ENCODE measurements at regions of chr6 and their contacts with region 1.

Region 1: GRCh38 chr6:13908955-13909381 is 15.8 kb upstream of the RNF182 start:
- DNase-seq: peak; percentile 27
- ATAC-seq: peak; percentile 91
- H3K4me3 ChIP-seq: no peak overlapping the region
- H3K27ac ChIP-seq: no peak overlapping the region
- H3K4me1 ChIP-seq: no peaks in the 10 kb centered on the region
- H3K27me3 ChIP-seq: no peaks in the 10 kb centered on the region
- CTCF ChIP-seq: peak; percentile 72 to 88 (median 72)
- EP300 ChIP-seq: no peak
- POLR2A ChIP-seq: no peak
- RAD21 ChIP-seq: peak; percentile 93

Region 2: DNA sequence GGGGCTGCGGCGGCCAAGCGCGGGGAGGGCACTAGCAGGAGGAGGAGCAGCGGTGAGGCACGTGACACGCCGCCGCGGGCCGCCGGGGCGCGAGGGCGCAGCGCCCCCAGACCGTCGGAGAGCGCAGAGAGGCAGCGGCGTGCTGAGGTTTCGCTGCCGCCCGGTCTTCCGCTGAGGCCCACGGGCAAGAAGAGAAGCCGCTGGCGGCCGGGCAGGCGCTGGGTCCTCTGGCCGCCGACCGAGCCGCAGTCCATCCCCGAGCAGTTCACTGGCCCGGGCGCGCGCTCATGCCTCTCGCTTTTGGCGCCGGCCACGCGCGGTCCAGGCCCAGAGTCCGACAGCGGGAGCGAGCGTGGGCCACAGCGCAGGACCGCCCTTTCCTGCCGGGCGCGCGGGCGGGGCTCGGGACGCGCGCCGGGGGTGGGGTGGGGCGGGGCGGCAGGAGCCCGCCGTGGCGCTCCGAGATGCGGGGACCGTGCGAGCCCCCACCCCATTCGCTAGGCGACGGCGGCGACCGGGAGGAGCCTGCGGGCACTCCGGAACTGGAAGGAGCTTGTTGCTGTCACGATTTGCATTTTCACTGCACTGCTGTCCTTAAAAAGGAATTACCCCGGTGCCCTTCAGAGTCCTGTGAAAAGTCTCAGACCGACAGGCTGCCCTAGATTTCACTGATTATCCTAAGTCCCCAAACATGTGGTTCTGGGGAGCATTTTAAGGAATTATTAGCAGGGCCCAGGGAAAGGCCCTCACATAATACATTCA is 94.6 kb before region 1 on chr6 and contains the start of gene MCUR1:
- CTCF ChIA-PET with region 1: interaction called, 3 read pairs
- POLR2A ChIA-PET with region 1: interaction called, 4 read pairs
- RAD21 ChIA-PET with region 1: no interaction called
- SMC1A ChIA-PET with region 1: interaction called, 10 read pairs
- in situ Hi-C with region 1: no loop called
- intact Hi-C with region 1: no loop called
- DNase-seq: peak; percentile 80
- ATAC-seq: peak; percentile 89
- H3K4me3 ChIP-seq: peak within 1 kb of the TSS; percentile 74
- H3K27ac ChIP-seq: peak within 1 kb of the TSS; percentile 95
- H3K4me1 ChIP-seq: peaks cover 6% of the 10 kb centered on the region
- H3K27me3 ChIP-seq: no peaks in the 10 kb centered on the region
- CTCF ChIP-seq: peak in 2 of 3 experiments; percentile 5 to 45; a peak in 2 of 6 replicates
- EP300 ChIP-seq: no peak
- POLR2A ChIP-seq: peak; percentile 92
- RAD21 ChIP-seq: 0 out of 2 replicates have a peak, but pooled peaks have one; percentile 2
- polyA plus RNA-seq, gene MCUR1: 4.4 to 9.4 TPM

Region 3: DNA sequence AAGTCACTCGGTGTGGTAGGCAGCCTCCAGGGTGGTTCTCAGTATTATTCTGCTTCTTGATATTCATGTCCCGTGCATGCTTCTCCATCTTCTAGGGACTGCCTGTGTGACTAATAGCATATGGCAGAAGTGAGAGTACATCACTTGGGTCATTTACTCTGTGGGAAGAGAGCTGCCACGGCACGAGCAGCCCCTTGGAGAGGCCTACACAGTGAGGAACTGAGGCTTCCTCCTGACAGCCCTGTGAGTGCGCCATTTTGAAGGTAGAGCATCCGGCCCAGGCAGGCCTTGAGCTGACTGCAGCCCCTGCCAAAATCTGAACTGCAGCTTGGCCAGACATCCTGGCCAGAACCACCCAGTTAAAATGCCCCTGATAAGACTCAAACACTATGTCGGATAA is 77.4 kb before region 1 on chr6:
- CTCF ChIA-PET with region 1: no interaction called
- POLR2A ChIA-PET with region 1: no interaction called
- RAD21 ChIA-PET with region 1: no interaction called
- SMC1A ChIA-PET with region 1: no interaction called
- in situ Hi-C with region 1: no loop called
- intact Hi-C with region 1: no loop called
- DNase-seq: no peak
- ATAC-seq: peak; percentile 93
- H3K4me3 ChIP-seq: no peak overlapping the region
- H3K27ac ChIP-seq: peak overlapping the region; percentile 1; the same call in 1 of the 2 replicates
- H3K4me1 ChIP-seq: peaks cover 3% of the 10 kb centered on the region; the same call in 1 of the 2 replicates
- H3K27me3 ChIP-seq: no peaks in the 10 kb centered on the region
- CTCF ChIP-seq: no peak
- EP300 ChIP-seq: no peak
- POLR2A ChIP-seq: no peak
- RAD21 ChIP-seq: no peak

Region 4: GRCh38 chr6:14009431-14009830 is 100.5 kb after region 1 on chr6:
- CTCF ChIA-PET with region 1: no interaction called
- POLR2A ChIA-PET with region 1: no interaction called
- RAD21 ChIA-PET with region 1: no interaction called
- SMC1A ChIA-PET with region 1: no interaction called
- in situ Hi-C with region 1: no loop called
- intact Hi-C with region 1: no loop called
- DNase-seq: no peak
- ATAC-seq: no peak
- H3K4me3 ChIP-seq: no peak overlapping the region
- H3K27ac ChIP-seq: no peak overlapping the region
- H3K4me1 ChIP-seq: no peaks in the 10 kb centered on the region
- H3K27me3 ChIP-seq: peaks cover 0 to 4% of the 10 kb centered on the region in 2 experiments; a peak in 2 of 4 replicates
- CTCF ChIP-seq: no peak
- EP300 ChIP-seq: no peak
- POLR2A ChIP-seq: no peak
- RAD21 ChIP-seq: no peak

Region 5: GRCh38 chr6:14037402-14038277 is 128.7 kb after region 1 on chr6:
- CTCF ChIA-PET with region 1: interaction called, 11 read pairs
- POLR2A ChIA-PET with region 1: no interaction called
- RAD21 ChIA-PET with region 1: interaction called, 3 read pairs
- SMC1A ChIA-PET with region 1: no interaction called
- in situ Hi-C with region 1: no loop called
- intact Hi-C with region 1: no loop called
- DNase-seq: no peak
- ATAC-seq: peak; percentile 16; the same call in 1 of the 3 replicates
- H3K4me3 ChIP-seq: no peak overlapping the region
- H3K27ac ChIP-seq: no peak overlapping the region
- H3K4me1 ChIP-seq: peaks cover 14% of the 10 kb centered on the region
- H3K27me3 ChIP-seq: no peaks in the 10 kb centered on the region; a peak in 1 of 4 replicates
- CTCF ChIP-seq: no peak
- EP300 ChIP-seq: no peak
- POLR2A ChIP-seq: no peak
- RAD21 ChIP-seq: no peak

Region 6: DNA sequence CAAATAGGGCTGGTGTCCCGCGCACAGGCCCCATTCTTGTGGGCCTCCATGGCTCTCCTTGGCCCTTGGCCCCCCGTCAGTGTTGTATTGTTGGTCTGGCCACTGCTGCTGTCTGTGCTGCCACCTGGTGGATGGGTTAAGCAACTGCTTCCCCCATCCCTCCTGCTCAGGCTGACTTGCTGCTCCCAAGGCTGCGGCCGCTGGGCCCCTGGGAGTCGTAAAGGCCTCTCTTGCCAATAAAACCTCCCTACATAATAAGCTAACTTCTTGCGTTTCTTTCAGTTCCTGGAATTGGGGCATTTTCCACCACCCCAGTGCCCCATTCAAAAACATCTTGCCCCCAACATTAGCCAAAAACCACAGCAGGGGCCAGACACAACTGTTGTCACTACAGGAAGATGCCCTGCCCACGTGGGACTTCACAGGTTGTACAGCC is 235.7 kb after region 1 on chr6:
- CTCF ChIA-PET with region 1: interaction called, 93 read pairs
- POLR2A ChIA-PET with region 1: no interaction called
- RAD21 ChIA-PET with region 1: interaction called, 7 read pairs
- SMC1A ChIA-PET with region 1: interaction called, 20 read pairs
- in situ Hi-C with region 1: loop called (anchors 5 kb)
- intact Hi-C with region 1: loop called (anchors 1 kb)
- DNase-seq: peak; percentile 40
- ATAC-seq: peak; percentile 92
- H3K4me3 ChIP-seq: no peak overlapping the region
- H3K27ac ChIP-seq: no peak overlapping the region
- H3K4me1 ChIP-seq: peaks cover 7% of the 10 kb centered on the region; the same call in 1 of the 2 replicates
- H3K27me3 ChIP-seq: no peaks in the 10 kb centered on the region
- CTCF ChIP-seq: peak; percentile 89 to 96 (median 94)
- EP300 ChIP-seq: no peak
- POLR2A ChIP-seq: no peak
- RAD21 ChIP-seq: peak; percentile 90

Region 7: GRCh38 chr6:15464211-15464725 is 1555.3 kb after region 1 on chr6:
- CTCF ChIA-PET with region 1: no interaction called
- POLR2A ChIA-PET with region 1: no interaction called
- RAD21 ChIA-PET with region 1: no interaction called
- SMC1A ChIA-PET with region 1: no interaction called
- in situ Hi-C with region 1: loop called (anchors 25 kb)
- intact Hi-C with region 1: no loop called
- DNase-seq: no peak
- ATAC-seq: peak; percentile 95
- H3K4me3 ChIP-seq: no peak overlapping the region
- H3K27ac ChIP-seq: no peak overlapping the region
- H3K4me1 ChIP-seq: no peaks in the 10 kb centered on the region
- H3K27me3 ChIP-seq: no peaks in the 10 kb centered on the region
- CTCF ChIP-seq: peak; percentile 60 to 78 (median 72)
- EP300 ChIP-seq: no peak
- POLR2A ChIP-seq: no peak
- RAD21 ChIP-seq: peak; percentile 51

Measured in GM12878 (cell line).